GM23248 (cell line): ENCODE measurements at regions of chr12 and their contacts with region 1.

Region 1: DNA sequence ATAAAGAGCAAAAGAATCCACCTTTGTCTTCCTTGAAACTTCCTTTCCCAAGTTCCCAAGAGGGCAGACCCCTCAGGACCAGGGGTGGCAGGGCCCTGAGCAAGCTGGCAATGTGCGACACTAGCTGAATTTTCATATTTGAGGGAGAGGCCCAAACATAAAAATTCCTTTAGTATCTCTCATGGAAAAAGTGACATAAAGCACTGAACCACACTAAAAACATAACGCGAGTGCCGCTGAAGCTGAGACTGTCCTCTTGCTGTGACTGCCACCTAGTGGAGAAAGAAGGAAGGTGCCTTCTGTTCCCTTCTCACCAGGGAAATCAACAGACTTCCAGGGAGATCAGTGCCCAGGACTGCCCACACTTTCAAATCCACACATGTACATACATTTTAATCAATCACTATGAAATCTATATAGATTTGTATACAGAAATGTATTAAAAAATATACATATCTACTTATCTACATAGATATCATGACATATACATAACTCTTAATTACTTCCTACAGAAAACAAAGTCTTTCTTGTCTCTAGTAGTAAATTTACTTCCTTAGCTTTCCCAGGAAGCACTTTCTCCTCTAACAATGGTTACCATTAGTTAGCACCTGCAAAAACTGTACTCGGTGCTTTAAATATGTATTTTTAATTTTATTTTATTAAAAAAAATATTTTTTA is 53.8 kb downstream of the SSH1 start:
- DNase-seq: peak; percentile 95
- H3K4me3 ChIP-seq: peak overlapping the region; percentile 36; the same call in 1 of the 2 replicates
- H3K27ac ChIP-seq: peak overlapping the region; percentile 97
- H3K4me1 ChIP-seq: peaks cover 66% of the 10 kb centered on the region
- H3K27me3 ChIP-seq: no peaks in the 10 kb centered on the region

Region 2: DNA sequence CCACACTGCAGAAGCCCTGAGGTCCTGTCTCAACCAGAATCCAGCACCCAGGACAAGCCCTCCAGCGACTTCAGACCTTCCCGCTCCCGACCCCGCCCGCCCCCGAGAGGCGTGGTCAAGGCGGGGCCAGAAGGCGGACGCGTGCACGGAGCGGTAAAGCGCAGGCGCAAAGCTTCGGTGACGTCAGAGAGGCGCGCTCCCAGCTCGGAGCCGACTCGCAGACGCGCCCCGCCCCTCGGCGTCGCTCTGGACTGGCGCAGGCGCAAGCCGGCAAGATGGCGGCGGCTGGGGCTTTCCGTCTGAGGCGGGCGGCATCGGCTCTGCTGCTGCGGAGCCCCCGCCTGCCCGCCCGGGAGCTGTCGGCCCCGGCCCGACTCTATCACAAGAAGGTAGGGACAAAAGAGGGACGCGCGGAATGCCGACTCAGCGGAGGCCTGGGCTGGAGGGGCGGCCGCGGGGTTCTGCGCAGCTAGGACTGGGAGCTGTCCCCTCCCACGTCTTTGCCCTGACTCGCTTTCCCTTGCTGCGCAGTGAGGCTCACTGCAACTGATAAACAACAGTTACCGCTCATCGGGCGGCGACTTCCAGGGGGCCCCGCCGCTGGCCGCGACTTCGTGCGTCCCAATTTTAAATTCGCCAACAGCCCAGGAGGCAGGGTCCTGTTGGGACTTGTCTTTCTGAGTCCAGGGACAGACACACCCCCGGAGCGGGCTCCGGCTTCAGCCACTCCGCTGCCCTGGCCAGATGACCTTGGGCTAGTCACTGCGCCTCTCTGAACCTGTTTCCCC is 241.0 kb before region 1 on chr12 and contains the start of gene ISCU:
- in situ Hi-C with region 1: loop called (anchors 10 kb)
- DNase-seq: peak; percentile 98
- H3K4me3 ChIP-seq: peak within 1 kb of the TSS; percentile 98
- H3K27ac ChIP-seq: peak within 1 kb of the TSS; percentile 91
- H3K4me1 ChIP-seq: peaks cover 36% of the 10 kb centered on the region
- H3K27me3 ChIP-seq: no peaks in the 10 kb centered on the region
- total RNA-seq, gene ISCU: 145 and 159 TPM in 2 replicates

Region 3: GRCh38 chr12:108664338-108665258 is 139.0 kb before region 1 on chr12:
- in situ Hi-C with region 1: loop called (anchors 10 kb)
- DNase-seq: peak; percentile 95
- H3K4me3 ChIP-seq: peak overlapping the region; percentile 27; the same call in 1 of the 2 replicates
- H3K27ac ChIP-seq: peak overlapping the region; percentile 80
- H3K4me1 ChIP-seq: peaks cover 69% of the 10 kb centered on the region
- H3K27me3 ChIP-seq: no peaks in the 10 kb centered on the region